Activated naive CD4-positive, alpha-beta T cell treated with anti-CD3 and anti-CD28 coated beads, Interleukin-2, amount 10 ng/mL, durations not matched to agents 7 days and 5 days (primary cell): ENCODE measurements at regions of chrX and their contacts with region 1.

Region 1: GRCh38 chrX:103211012-103211715 is 3.7 kb upstream of the BEX4 start:
- DNase-seq: peak; percentile 65
- H3K4me3 Mint-ChIP-seq: no peak overlapping the region
- H3K27ac Mint-ChIP-seq: no peak overlapping the region
- H3K4me1 Mint-ChIP-seq: peaks cover 8% of the 10 kb centered on the region
- H3K27me3 Mint-ChIP-seq: peaks cover 2% of the 10 kb centered on the region

Region 2: GRCh38 chrX:102950908-102951866 is 260.0 kb before region 1 on chrX:
- CTCF ChIA-PET with region 1: no interaction called
- DNase-seq: peak; percentile 63
- H3K4me3 Mint-ChIP-seq: no peak overlapping the region
- H3K27ac Mint-ChIP-seq: no peak overlapping the region
- H3K4me1 Mint-ChIP-seq: peaks cover 4% of the 10 kb centered on the region
- H3K27me3 Mint-ChIP-seq: peaks cover 4% of the 10 kb centered on the region

Region 3: GRCh38 chrX:103464774-103465117 is 253.6 kb after region 1 on chrX:
- CTCF ChIA-PET with region 1: interaction called, 24 read pairs
- DNase-seq: peak; percentile 84
- H3K4me3 Mint-ChIP-seq: peak overlapping the region; percentile 78
- H3K27ac Mint-ChIP-seq: peak overlapping the region; percentile 84
- H3K4me1 Mint-ChIP-seq: peaks cover 41% of the 10 kb centered on the region
- H3K27me3 Mint-ChIP-seq: no peaks in the 10 kb centered on the region

Region 4: GRCh38 chrX:103626855-103627254 is 415.7 kb after region 1 on chrX:
- CTCF ChIA-PET with region 1: no interaction called
- DNase-seq: no peak
- H3K4me3 Mint-ChIP-seq: no peak overlapping the region
- H3K27ac Mint-ChIP-seq: no peak overlapping the region
- H3K4me1 Mint-ChIP-seq: peaks cover 14% of the 10 kb centered on the region
- H3K27me3 Mint-ChIP-seq: no peaks in the 10 kb centered on the region